ENCODE measurements at regions of chr1 and their contacts with region 1.

Region 1: GRCh38 chr1:26349188-26349876 is 4.6 kb downstream of the CRYBG2 start:
- DNase-seq: no peak
- H3K4me3 ChIP-seq: no peak overlapping the region
- H3K4me3 Mint-ChIP-seq: no peak overlapping the region
- H3K27ac ChIP-seq: no peak overlapping the region
- H3K27ac Mint-ChIP-seq: peak overlapping the region in 1 of 8 donors; percentile 17
- H3K4me1 ChIP-seq: no peaks in the 10 kb centered on the region
- H3K4me1 Mint-ChIP-seq: no peaks in the 10 kb centered on the region
- H3K27me3 ChIP-seq: no peaks in the 10 kb centered on the region
- H3K27me3 Mint-ChIP-seq: peaks cover 0 to 3% of the 10 kb centered on the region in 2 donors

Region 2: GRCh38 chr1:25725490-25726130 is 623.7 kb before region 1 on chr1:
- CTCF ChIA-PET with region 1: no interaction called
- POLR2A ChIA-PET with region 1: interaction called, 17 read pairs
- DNase-seq: no peak
- H3K4me3 ChIP-seq: no peak overlapping the region
- H3K4me3 Mint-ChIP-seq: peak overlapping the region in 1 of 7 donors; percentile 27
- H3K27ac ChIP-seq: no peak overlapping the region
- H3K27ac Mint-ChIP-seq: peak overlapping the region in 1 of 8 donors; percentile 72
- H3K4me1 ChIP-seq: peaks cover 63% of the 10 kb centered on the region
- H3K4me1 Mint-ChIP-seq: peaks cover 16 to 31% (median 31%) of the 10 kb centered on the region in 3 donors
- H3K27me3 ChIP-seq: no peaks in the 10 kb centered on the region
- H3K27me3 Mint-ChIP-seq: peaks cover 0 to 4% of the 10 kb centered on the region in 2 donors

Region 3: DNA sequence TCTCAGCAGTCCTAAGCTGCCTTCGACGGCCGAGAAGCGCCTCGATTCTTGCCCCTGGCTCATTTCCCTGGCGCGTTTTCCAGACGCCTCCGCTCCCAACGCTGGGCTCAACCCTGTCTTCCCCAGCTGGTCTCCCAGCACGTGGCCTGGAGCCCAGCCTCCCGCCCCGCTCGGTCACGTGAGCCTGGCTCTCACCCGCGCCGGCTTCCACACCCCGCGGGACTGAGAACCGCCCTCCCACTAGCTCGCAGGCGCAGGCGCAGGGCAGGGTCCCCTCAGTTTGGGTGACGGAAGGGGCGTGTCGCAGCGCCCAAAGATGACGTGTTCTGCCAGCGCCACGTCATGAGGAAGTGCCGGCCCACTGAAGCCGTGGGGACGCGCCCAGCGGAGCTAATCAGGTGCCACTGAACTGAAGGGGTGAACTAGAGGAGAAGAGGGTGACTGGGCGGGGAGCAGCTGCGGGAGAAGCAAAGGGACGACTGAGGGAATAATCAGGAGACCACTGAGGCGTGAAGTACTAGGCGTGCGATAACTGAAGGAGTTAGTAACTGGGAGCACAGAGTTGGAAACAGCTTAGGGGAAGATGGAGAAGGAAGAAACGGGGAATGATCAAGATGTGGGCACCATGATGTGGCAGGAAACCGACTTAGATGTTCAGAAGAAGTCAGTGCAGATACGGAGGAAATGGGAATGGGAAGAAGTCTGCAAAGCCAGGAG is 82.8 kb after region 1 on chr1 and contains the start of gene DHDDS:
- CTCF ChIA-PET with region 1: no interaction called
- POLR2A ChIA-PET with region 1: interaction called, 12 read pairs
- DNase-seq: peak; percentile 96 to 98 (median 97)
- H3K4me3 ChIP-seq: peak within 1 kb of the TSS; percentile 69
- H3K4me3 Mint-ChIP-seq: peak within 1 kb of the TSS; percentile 90 to 98 (median 94)
- H3K27ac ChIP-seq: peak within 1 kb of the TSS; percentile 70
- H3K27ac Mint-ChIP-seq: peak within 1 kb of the TSS; percentile 75 to 99 (median 96)
- H3K4me1 ChIP-seq: peaks cover 19% of the 10 kb centered on the region
- H3K4me1 Mint-ChIP-seq: peaks cover 19 to 24% (median 24%) of the 10 kb centered on the region in 3 donors
- H3K27me3 ChIP-seq: no peaks in the 10 kb centered on the region
- H3K27me3 Mint-ChIP-seq: peaks cover 0 to 6% of the 10 kb centered on the region in 2 donors
- total RNA-seq, gene DHDDS: 47.9 to 52.2 TPM

Measured in CD8-positive, alpha-beta memory T cell (primary cell).